Naive thymus-derived CD8-positive, alpha-beta T cell (primary cell): ENCODE measurements at regions of chr6 and their contacts with region 1.

Region 1: DNA sequence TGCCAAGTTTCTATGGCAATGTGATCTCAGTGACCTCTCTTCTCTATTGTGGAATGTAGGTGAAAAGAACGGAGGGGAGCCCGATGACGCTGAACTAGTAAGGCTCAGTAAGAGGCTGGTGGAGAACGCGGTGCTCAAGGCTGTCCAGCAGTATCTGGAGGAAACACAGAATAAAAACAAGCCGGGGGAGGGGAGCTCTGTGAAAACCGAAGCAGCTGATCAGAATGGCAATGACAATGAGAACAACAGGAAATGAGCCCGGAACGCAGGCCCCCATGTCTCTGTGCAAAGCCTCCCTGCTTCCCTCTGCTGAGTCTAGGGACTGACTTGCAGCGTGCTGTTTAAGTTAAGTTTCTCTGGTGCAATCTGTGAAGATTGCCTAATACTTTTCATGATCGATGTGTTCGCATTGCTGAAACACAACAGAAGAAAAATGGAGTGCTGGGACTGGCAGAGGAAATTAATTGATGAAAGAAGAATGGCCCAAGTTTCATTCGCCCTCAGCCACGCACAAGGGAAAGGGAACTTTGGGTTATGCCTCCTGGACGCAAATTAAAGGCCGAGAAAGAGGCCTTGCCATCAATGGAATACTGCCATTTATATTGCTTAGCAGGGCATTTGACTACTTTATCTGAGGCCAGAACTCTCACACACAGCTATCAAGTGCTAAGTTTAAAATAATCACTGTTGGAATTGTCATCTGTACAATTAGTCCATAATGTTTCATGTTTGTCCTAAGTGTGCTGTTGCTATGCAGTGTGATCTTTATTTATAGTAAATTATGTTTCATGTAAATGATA is 146.4 kb downstream of the AKAP7 start:
- DNase-seq: peak; percentile 36 to 91 (median 73)
- ATAC-seq: peak; percentile 97
- H3K4me3 Mint-ChIP-seq: peak overlapping the region; percentile 73 to 90 (median 82)
- H3K27ac Mint-ChIP-seq: peak overlapping the region; percentile 97 to 100 (median 98)
- H3K4me1 Mint-ChIP-seq: peaks cover 22 to 69% (median 52%) of the 10 kb centered on the region in 4 donors
- H3K27me3 Mint-ChIP-seq: no peaks in the 10 kb centered on the region

Region 2: GRCh38 chr6:131205481-131206244 is 76.0 kb before region 1 on chr6:
- POLR2A ChIA-PET with region 1: interaction called, 53 read pairs
- DNase-seq: peak in 2 of 10 donors; percentile 24 to 28
- ATAC-seq: peak in 1 of 2 donors; percentile 19
- H3K4me3 Mint-ChIP-seq: peak overlapping the region in 5 of 10 donors; percentile 1 to 68 (median 36)
- H3K27ac Mint-ChIP-seq: peak overlapping the region; percentile 18 to 89 (median 74)
- H3K4me1 Mint-ChIP-seq: peaks cover 27 to 63% (median 59%) of the 10 kb centered on the region in 4 donors
- H3K27me3 Mint-ChIP-seq: no peaks in the 10 kb centered on the region

Region 3: GRCh38 chr6:131292145-131292938 is 10.7 kb after region 1 on chr6:
- POLR2A ChIA-PET with region 1: interaction called, 33 read pairs
- DNase-seq: peak in 1 of 10 donors; percentile 8
- ATAC-seq: peak in 1 of 2 donors; percentile 32
- H3K4me3 Mint-ChIP-seq: peak overlapping the region in 8 of 10 donors; percentile 19 to 67 (median 38)
- H3K27ac Mint-ChIP-seq: peak overlapping the region; percentile 53 to 94 (median 90)
- H3K4me1 Mint-ChIP-seq: peaks cover 19 to 47% (median 31%) of the 10 kb centered on the region in 4 donors
- H3K27me3 Mint-ChIP-seq: no peaks in the 10 kb centered on the region